Motor neuron (in vitro differentiated cells): ENCODE measurements at regions of chr3 and their contacts with region 1.

Region 1: GRCh38 chr3:25582242-25582641 is 82.5 kb downstream of the TOP2B start:
- ATAC-seq: peak in 7 of 8 experiments; percentile 37 to 100 (median 97)
- H3K4me3 ChIP-seq: no peak overlapping the region
- H3K27ac ChIP-seq: no peak overlapping the region
- H3K4me1 ChIP-seq: peaks cover 0 to 4% of the 10 kb centered on the region in 2 donors

Region 2: GRCh38 chr3:24773798-24774197 is 808.4 kb before region 1 on chr3:
- in situ Hi-C with region 1: loop called in 4 of 9 experiments (anchors 10 to 25 kb)
- ATAC-seq: peak; percentile 85 to 98 (median 92)
- H3K4me3 ChIP-seq: no peak overlapping the region
- H3K27ac ChIP-seq: no peak overlapping the region
- H3K4me1 ChIP-seq: peaks cover 0 to 7% of the 10 kb centered on the region in 2 donors

Region 3: DNA sequence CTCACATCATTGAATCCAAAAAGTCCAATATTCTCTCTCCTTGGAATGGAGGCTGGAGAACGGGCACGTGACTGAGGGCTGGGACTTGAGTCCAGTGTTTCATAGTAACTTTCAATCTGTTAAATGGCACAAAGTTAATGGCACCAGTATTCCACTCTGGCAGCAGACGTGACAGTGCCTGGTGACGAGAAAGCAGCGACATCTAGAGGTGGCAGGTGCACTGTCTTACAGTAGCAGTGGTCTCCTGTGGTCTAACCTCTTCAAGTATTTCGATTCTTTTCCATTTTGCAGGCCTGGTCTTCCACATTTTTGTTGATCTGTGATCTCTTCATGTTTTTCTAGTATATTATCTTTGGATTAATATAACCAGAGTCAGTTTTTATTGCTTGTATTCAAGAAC is 314.8 kb after region 1 on chr3:
- in situ Hi-C with region 1: no loop called
- ATAC-seq: peak in 3 of 8 experiments; percentile 78 to 94 (median 81)
- H3K4me3 ChIP-seq: no peak overlapping the region
- H3K27ac ChIP-seq: no peak overlapping the region
- H3K4me1 ChIP-seq: no peaks in the 10 kb centered on the region

Region 4: DNA sequence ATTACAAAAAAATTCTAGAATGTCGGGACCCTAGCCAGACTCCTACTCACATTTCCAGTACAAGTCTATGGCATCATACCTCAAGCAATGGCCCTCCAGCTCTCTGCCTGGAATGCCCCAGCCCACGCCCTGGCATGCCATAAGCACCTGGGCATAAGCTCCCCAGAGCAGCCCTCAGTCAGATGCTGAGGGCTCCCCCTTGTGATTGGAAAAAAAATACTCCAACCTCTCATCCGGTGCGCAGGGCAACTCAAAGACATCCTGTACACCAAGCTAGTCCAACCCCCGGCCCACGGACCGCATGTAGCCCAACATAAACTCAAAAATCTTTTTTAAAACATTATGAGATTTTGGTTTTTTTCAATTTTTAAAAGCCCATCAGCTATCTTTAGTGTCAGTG is 1671.6 kb after region 1 on chr3:
- in situ Hi-C with region 1: no loop called
- ATAC-seq: peak in 4 of 8 experiments; percentile 54 to 84 (median 83)
- H3K4me3 ChIP-seq: no peak overlapping the region
- H3K27ac ChIP-seq: no peak overlapping the region
- H3K4me1 ChIP-seq: no peaks in the 10 kb centered on the region